H1 (cell line): ENCODE measurements at regions of chr20 and their contacts with region 1.

Region 1: DNA sequence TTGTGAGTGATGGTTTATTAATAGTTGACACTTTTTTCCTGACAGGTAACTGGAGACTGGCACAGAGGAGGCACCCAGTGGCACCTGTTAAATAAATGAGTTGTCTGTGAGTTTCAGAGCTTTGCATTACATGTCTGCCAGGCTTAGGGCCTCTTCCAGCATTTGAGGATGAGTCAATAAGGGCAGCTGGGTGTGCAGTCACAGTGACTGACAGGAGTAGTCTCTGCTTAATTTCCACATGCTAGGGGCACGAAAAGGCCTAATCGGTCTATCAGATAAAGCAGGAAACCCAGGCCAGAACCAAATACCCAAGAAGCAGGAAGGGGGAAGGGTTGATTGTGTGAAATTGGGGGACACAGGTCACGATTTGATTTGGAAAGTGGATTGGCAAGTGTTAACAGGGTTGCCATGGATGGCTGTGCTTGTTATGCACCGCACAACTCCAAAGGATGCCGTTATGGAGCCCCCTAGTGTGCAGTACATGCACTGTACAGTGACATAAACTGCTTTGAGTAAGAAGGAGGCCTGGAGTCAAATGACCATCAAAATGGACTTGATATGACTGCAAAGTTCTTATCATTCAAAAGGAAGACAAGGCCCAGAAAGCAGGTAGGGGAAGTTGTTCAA is 111.9 kb upstream of the GGTLC1 start:
- DNase-seq: no peak
- H3K4me3 ChIP-seq: no peak overlapping the region
- H3K27ac ChIP-seq: no peak overlapping the region
- H3K4me1 ChIP-seq: no peaks in the 10 kb centered on the region
- H3K27me3 ChIP-seq: 0 out of 7 replicates have a peak, but pooled peaks cover 0 to 2% (median 0%) of the 10 kb centered on the region in 4 experiments
- CTCF ChIP-seq: peak; percentile 41 to 77 (median 66)
- EP300 ChIP-seq: no peak
- POLR2A ChIP-seq: no peak
- RAD21 ChIP-seq: peak; percentile 59 to 72

Region 2: DNA sequence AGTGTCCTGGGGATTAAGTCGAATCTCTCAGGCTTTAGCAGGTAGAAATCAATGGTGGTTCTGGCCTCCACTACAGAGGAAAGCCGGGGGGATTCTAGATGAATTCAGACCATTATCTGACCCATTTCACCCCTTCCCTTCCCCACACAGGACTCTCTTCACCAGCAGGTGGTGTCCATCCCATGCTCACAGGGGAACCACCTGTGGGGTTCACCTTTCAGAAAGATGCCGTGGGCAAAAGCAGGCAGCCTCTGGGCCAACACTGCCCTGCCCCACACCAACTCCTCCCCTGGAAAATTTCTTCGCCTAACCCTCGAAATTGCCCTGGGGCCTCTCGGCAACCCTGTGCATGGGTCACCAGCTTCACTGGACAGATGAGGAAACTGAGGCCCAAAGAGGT is 11.9 kb after region 1 on chr20:
- CTCF ChIA-PET with region 1: interaction called, 19 read pairs
- POLR2A ChIA-PET with region 1: no interaction called
- DNase-seq: no peak
- H3K4me3 ChIP-seq: no peak overlapping the region
- H3K27ac ChIP-seq: no peak overlapping the region
- H3K4me1 ChIP-seq: peaks cover 0 to 2% (median 0%) of the 10 kb centered on the region in 4 experiments; a peak in 1 of 7 replicates
- H3K27me3 ChIP-seq: no peaks in the 10 kb centered on the region
- CTCF ChIP-seq: peak in 2 of 3 experiments; percentile 10 to 13; a peak in 1 of 4 replicates
- EP300 ChIP-seq: no peak
- POLR2A ChIP-seq: no peak
- RAD21 ChIP-seq: peak; percentile 13 to 22; a peak in 2 of 4 replicates

Region 3: GRCh38 chr20:24118441-24119175 is 18.1 kb after region 1 on chr20:
- CTCF ChIA-PET with region 1: interaction called, 19 read pairs
- POLR2A ChIA-PET with region 1: no interaction called
- DNase-seq: no peak
- H3K4me3 ChIP-seq: no peak overlapping the region
- H3K27ac ChIP-seq: no peak overlapping the region
- H3K4me1 ChIP-seq: peaks cover 0 to 2% (median 0%) of the 10 kb centered on the region in 4 experiments; a peak in 1 of 7 replicates
- H3K27me3 ChIP-seq: no peaks in the 10 kb centered on the region
- CTCF ChIP-seq: no peak
- EP300 ChIP-seq: no peak
- POLR2A ChIP-seq: no peak
- RAD21 ChIP-seq: no peak